GM13976 (cell line): ENCODE measurements at regions of chr6 and their contacts with region 1.

Region 1: GRCh38 chr6:127855542-127856159 is 45.2 kb downstream of the THEMIS start:
- DNase-seq: no peak
- CTCF ChIP-seq: peak; percentile 19

Region 2: GRCh38 chr6:128124670-128125069 is 269.0 kb after region 1 on chr6:
- in situ Hi-C with region 1: no loop called
- DNase-seq: no peak
- CTCF ChIP-seq: no peak

Region 3: GRCh38 chr6:128327890-128328289 is 472.2 kb after region 1 on chr6:
- in situ Hi-C with region 1: loop called (anchors 25 kb)
- DNase-seq: peak; percentile 5
- CTCF ChIP-seq: no peak